ENCODE measurements at regions of chr12 and their contacts with region 1.

Region 1: GRCh38 chr12:51270067-51270970 is at the start of gene SMAGP:
- DNase-seq: peak; percentile 86
- H3K4me3 Mint-ChIP-seq: peak within 1 kb of the TSS; percentile 83
- H3K27ac Mint-ChIP-seq: peak within 1 kb of the TSS; percentile 65
- H3K4me1 Mint-ChIP-seq: peaks cover 19% of the 10 kb centered on the region
- H3K27me3 Mint-ChIP-seq: peaks cover 27% of the 10 kb centered on the region
- total RNA-seq, gene SMAGP: 0.24 and 0.26 TPM in 2 replicates

Region 2: GRCh38 chr12:51217968-51218606 is 52.2 kb before region 1 on chr12 and contains the start of gene POU6F1:
- intact Hi-C with region 1: no loop called
- DNase-seq: peak; percentile 90
- H3K4me3 Mint-ChIP-seq: peak within 1 kb of the TSS; percentile 85
- H3K27ac Mint-ChIP-seq: peak within 1 kb of the TSS; percentile 88
- H3K4me1 Mint-ChIP-seq: peaks cover 13% of the 10 kb centered on the region
- H3K27me3 Mint-ChIP-seq: no peaks in the 10 kb centered on the region
- total RNA-seq, gene POU6F1: 5.1 and 9.0 TPM in 2 replicates

Region 3: DNA sequence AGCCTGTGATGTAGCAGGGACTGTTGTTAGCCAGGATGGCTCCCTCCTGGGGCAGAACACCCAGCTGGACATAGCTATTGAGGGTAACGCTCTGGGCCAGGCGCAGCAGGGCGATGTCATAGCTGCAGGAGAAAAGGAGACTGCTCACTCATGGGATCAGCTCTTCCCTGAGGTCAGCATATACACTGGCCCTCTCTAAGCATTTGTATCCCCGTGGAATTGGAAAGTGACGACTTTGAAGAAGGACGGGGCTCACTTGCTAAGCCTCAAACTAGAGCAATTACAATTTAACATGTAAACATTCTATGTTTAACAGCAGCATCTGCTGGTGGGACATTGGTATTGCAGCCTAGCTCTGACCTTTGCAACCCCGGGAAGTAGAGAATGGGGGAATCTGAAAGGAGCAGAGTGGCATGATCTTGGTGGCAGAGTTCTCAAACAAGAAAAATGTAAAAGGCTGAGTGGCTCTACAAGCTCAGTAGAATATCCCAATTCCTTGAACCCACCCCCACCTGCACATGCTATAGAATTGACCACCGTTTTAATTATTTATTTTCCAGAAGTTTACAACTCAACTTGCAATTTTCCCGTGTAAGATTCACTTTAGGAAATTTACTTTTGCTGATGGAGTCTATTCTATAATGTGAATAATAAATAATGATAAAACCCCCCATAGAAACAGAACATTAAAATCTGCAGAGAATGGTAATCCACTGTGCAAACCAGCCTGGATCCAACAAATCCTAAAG is 71.1 kb after region 1 on chr12:
- intact Hi-C with region 1: loop called (anchors 1 kb)
- DNase-seq: peak; percentile 93
- H3K4me3 Mint-ChIP-seq: peak overlapping the region; percentile 42
- H3K27ac Mint-ChIP-seq: peak overlapping the region; percentile 35
- H3K4me1 Mint-ChIP-seq: peaks cover 14% of the 10 kb centered on the region
- H3K27me3 Mint-ChIP-seq: peaks cover 5% of the 10 kb centered on the region

Measured in activated CD4-positive, alpha-beta T cell treated with anti-CD3 and anti-CD28 coated beads, Interleukin-2, amount 10 ng/mL, durations not matched to agents 24 days and 14 days (primary cell).